Activated T-helper 2 cell treated with anti-CD3 and anti-CD28 coated beads, Interferon-gamma antibody, Interleukin-2, Interleukin-4, amounts not matched to agents 10 μg/mL and 5 μg/mL and 100 μg/mL, durations not matched to agents 14 hours and 24 hours and 36 hours (primary cell): ENCODE measurements at regions of chr3 and their contacts with region 1.

Region 1: DNA sequence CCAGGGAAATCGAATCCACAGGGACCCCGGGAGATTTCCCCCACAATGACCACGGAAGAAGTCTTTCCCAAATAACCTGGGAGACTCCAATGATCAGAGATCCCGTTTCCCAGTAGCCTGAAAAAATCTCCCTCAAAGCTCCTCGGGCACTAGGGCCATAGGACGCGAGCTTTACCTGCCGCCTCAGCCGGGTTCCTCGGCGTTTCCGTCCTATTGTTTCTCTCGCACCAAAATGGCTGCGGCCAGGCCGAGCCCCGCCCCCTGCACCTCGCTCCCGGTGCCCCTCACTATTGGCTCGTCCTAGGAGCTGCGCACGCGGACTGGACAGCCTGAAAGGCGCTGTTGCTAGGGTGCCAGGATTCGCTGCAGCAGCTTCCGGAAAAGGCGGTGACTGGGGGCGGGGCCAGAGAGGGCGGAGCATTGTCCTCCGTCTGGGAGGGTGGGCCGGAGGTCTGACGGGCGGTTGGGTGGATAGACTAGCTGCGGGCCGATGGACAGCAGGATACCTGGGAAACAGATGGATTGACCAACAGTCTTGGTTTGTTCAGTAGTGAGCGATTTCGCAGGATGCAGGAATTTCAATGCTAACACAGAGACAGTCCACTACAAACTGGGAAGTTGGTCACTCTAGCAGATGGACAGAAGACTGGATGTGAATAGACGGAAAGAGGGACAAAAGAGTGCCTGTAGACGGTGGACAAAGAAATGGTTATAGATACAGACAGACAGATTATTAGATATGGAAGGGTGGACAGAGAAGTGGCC is at the start of gene IP6K2:
- DNase-seq: peak; percentile 98
- H3K4me3 Mint-ChIP-seq: peak within 1 kb of the TSS; percentile 98
- H3K27ac Mint-ChIP-seq: peak within 1 kb of the TSS; percentile 97
- H3K4me1 Mint-ChIP-seq: peaks cover 28% of the 10 kb centered on the region
- H3K27me3 Mint-ChIP-seq: peaks cover 13% of the 10 kb centered on the region
- total RNA-seq, gene IP6K2: 65.4 and 68.2 TPM in 2 replicates

Region 2: DNA sequence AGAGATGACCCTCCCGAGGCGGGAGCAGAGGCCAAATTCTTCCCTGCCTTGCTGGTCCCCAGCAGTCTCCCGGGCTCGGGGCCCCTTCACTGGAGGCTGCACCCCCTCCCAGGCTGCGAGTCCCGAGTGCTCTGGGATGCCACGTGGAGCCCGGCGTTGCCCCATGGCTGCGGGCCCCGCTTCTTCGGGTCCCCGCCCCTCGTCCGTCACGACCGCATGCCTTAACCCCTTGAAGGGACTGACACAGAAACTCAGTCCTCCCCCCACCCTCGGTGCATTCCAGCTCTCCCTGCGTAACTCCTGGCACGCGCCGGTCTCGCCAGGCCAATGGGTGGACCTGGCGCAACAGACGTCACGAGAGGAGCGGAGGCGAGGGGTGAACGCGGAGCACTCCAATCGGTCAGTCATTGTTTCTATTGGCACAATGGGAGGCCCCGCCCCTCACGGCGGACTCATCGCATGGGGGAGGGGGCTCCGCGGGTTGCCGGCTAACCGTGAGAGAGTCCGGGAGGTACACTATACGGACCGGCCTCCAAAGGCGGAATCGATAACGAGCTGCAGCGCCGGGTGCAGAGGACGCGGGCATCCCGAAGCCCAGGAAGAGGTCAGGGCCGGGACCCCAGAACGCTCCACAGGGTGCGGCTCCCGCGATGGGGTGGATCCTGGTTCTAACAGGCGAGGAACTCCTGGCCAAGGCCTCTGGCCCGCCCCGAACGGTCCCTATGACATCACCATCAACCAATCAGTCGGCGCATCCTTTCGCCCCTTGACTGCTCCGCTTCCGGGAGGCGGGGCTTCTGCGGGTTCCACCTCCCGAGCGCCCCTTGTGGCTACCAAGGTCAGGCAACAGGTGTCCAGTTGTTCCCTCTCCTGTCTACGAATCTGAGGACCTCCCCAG is 53.5 kb before region 1 on chr3:
- intact Hi-C with region 1: loop called (anchors 1 kb)
- DNase-seq: peak; percentile 94
- H3K4me3 Mint-ChIP-seq: peak overlapping the region; percentile 90
- H3K27ac Mint-ChIP-seq: peak overlapping the region; percentile 99
- H3K4me1 Mint-ChIP-seq: peaks cover 10% of the 10 kb centered on the region
- H3K27me3 Mint-ChIP-seq: peaks cover 8% of the 10 kb centered on the region

Region 3: DNA sequence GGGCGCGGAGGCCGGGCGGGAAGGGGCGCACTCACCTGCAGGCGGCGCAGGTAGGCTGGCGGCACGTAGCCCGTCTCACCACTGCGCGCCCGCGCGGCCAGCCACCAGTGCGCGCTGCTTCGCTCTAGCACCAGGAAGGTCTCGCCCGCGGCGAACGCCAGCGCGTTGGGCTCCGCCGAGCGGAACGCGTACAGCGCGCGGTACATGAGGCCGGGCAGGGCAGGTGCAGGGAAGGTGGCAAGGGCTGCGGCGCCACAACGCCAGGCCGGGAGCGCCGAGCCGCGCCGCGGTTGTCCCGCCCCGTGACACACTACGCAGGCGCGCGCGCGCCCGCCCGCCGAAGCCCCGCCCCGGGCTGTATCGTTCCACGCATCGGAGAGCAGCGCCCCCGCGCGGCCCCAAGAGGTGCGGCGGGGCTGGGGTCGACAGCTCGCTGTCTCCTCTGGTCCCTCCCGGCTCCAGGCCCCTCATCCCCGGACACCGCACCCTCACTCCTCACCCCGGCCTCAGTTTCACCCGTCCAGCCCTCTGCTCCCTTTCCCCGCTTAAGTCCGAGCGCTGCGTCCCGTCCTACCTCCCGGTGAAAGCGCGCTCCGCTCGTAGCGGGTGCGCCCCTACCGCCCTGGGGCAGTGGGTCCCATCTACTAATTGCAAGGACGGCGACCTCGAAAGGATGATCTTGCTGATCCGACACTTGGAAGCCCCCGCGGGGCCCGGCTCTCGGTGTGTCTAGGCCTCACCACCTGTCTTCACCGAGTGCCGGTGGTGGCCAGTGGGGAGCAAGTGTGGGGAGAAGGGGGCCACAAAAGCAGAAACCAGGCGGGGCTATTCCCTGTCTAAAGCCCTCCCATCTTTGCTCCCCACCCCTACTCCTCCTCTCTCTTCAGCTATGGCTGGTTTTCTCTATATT is 31.3 kb before region 1 on chr3 and contains the start of gene NCKIPSD:
- intact Hi-C with region 1: loop called (anchors 2 kb)
- DNase-seq: peak; percentile 84
- H3K4me3 Mint-ChIP-seq: peak within 1 kb of the TSS; percentile 95
- H3K27ac Mint-ChIP-seq: peak within 1 kb of the TSS; percentile 89
- H3K4me1 Mint-ChIP-seq: peaks cover 15% of the 10 kb centered on the region
- H3K27me3 Mint-ChIP-seq: no peaks in the 10 kb centered on the region
- total RNA-seq, gene NCKIPSD: 49.8 and 51.4 TPM in 2 replicates

Region 4: DNA sequence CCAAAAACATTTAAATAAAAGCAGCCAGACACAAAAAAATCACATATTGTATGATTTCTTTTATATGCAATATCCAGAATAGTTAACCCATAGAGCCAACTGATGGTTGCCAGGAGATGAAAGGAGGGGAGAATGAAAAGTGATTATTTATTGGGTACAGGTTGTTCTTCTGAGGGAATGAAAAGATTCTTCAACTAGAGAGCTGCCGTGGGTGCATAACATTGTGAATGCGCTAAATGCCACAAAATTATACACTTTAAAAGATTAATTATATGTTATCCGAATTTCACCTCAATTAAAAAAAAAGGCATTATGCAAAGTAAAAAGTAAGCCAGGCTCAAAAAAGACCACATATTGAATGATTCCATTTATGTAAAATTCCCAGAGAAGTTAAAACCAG is 94.4 kb after region 1 on chr3:
- intact Hi-C with region 1: no loop called
- DNase-seq: no peak
- H3K4me3 Mint-ChIP-seq: no peak overlapping the region
- H3K27ac Mint-ChIP-seq: peak overlapping the region; percentile 38
- H3K4me1 Mint-ChIP-seq: peaks cover 22% of the 10 kb centered on the region
- H3K27me3 Mint-ChIP-seq: no peaks in the 10 kb centered on the region